GM12878 (cell line): ENCODE measurements at regions of chr12 and their contacts with region 1.

Region 1: DNA sequence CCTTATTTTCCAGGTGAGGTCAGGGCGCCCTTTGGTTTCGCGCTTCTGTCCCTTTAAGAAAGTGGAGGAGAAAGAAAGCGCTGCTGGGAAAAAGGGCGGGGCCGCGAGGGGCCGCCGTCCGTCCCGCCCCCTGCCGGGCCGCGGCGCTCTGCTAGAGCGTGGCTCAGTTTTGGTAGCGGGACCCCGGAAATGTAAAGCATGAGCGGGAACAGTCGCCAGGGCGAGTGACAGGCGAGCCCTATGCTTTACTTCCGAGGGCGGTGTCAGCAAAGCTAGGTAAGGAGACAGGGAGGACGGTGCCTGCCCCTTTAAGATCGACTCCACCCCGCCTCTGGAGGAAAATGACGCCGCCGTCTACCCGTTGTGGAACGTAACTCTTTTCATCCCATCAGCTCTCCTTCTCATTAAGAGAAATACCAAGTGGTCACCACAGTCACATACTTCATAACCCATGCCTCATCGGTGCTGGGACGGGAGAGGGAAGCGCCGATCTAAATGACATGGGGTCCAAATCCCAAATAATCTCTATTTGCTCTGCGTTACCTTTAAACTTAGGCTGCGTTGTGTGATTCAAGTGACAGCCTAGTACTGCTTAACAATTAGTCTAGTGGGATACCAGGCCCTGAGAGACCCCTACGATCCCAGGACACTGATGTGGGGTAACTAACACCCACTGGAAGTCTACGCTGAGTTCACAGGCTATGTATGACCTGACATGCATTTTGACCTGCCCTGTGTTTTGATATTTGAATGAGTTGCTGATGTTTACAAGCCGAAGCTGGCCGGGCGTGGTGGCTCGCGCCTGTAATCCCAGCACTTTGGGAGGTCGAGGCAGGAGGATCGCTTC is at the start of gene ETFBKMT:
- DNase-seq: peak; percentile 90
- ATAC-seq: peak; percentile 99
- H3K4me3 ChIP-seq: peak within 1 kb of the TSS; percentile 85
- H3K27ac ChIP-seq: peak within 1 kb of the TSS; percentile 87
- H3K4me1 ChIP-seq: peaks cover 5% of the 10 kb centered on the region; the same call in 1 of the 2 replicates
- H3K27me3 ChIP-seq: no peaks in the 10 kb centered on the region
- CTCF ChIP-seq: peak; percentile 18 to 34 (median 22); a peak in 4 of 6 replicates
- EP300 ChIP-seq: no peak
- POLR2A ChIP-seq: peak; percentile 54; the same call in 1 of the 2 replicates
- RAD21 ChIP-seq: no peak
- polyA plus RNA-seq, gene ETFBKMT: 0.49 to 0.79 TPM

Region 2: DNA sequence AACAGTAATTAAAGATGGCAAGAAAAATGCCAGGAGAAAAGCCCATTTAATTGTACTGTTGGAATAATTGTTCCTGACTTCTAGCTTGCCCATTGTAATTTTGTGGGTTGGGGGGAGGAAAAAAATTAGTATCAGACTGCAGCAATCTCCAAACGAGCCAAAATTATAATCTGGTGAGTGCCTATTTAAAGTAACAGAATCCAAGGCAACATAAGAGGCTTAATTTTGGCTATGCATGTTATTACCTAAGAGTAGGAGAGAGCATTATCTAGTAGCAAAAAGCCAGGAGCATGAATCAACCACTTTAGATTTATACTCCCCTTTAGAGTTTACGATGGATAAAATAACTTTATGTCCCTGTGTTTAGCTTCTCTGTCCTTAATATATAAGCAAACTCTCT is 53.8 kb before region 1 on chr12:
- CTCF ChIA-PET with region 1: no interaction called
- POLR2A ChIA-PET with region 1: no interaction called
- RAD21 ChIA-PET with region 1: no interaction called
- SMC1A ChIA-PET with region 1: no interaction called
- in situ Hi-C with region 1: no loop called
- intact Hi-C with region 1: no loop called
- DNase-seq: no peak
- ATAC-seq: no peak
- H3K4me3 ChIP-seq: no peak overlapping the region
- H3K27ac ChIP-seq: no peak overlapping the region
- H3K4me1 ChIP-seq: peaks cover 24% of the 10 kb centered on the region
- H3K27me3 ChIP-seq: no peaks in the 10 kb centered on the region
- CTCF ChIP-seq: no peak
- EP300 ChIP-seq: no peak
- POLR2A ChIP-seq: no peak
- RAD21 ChIP-seq: no peak

Region 3: GRCh38 chr12:32365473-32366064 is 706.3 kb after region 1 on chr12:
- CTCF ChIA-PET with region 1: interaction called, 25 read pairs
- POLR2A ChIA-PET with region 1: no interaction called
- RAD21 ChIA-PET with region 1: interaction called, 11 read pairs
- SMC1A ChIA-PET with region 1: no interaction called
- in situ Hi-C with region 1: no loop called
- intact Hi-C with region 1: no loop called
- DNase-seq: peak; percentile 8
- ATAC-seq: peak; percentile 86
- H3K4me3 ChIP-seq: no peak overlapping the region
- H3K27ac ChIP-seq: no peak overlapping the region
- H3K4me1 ChIP-seq: no peaks in the 10 kb centered on the region
- H3K27me3 ChIP-seq: no peaks in the 10 kb centered on the region
- CTCF ChIP-seq: peak; percentile 67 to 83 (median 67)
- EP300 ChIP-seq: no peak
- POLR2A ChIP-seq: no peak
- RAD21 ChIP-seq: peak; percentile 85